Panc1 (cell line): ENCODE measurements at regions of chr3 and their contacts with region 1.

Region 1: GRCh38 chr3:42600111-42600988 is at the start of gene NKTR:
- DNase-seq: peak; percentile 91
- ATAC-seq: peak; percentile 94
- H3K4me3 ChIP-seq: peak within 1 kb of the TSS; percentile 88 to 97
- H3K27ac ChIP-seq: peak within 1 kb of the TSS; percentile 95
- H3K4me1 ChIP-seq: peaks cover 5% of the 10 kb centered on the region; the same call in 1 of the 2 replicates
- H3K27me3 ChIP-seq: no peaks in the 10 kb centered on the region
- CTCF ChIP-seq: no peak
- total RNA-seq, gene NKTR: 39.0 TPM

Region 2: DNA sequence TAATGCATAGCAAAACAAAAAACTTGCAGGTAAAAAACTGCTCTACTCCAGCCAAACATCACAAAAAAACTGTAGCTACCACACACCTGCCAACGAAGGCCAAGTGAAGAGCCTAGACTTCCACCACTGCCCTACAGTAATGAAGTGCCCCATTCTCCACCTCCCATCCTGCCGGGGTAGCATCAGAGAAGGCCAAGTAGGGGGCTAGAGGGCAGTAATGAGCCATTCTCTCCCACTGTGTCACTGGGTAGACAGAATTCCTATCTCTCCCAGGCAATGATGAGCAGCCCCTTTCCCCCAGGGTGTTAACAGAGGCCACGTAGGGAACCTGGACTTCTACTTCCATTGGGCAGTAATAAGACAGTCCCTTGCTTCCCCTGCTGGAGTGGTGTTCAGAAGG is 28.1 kb before region 1 on chr3:
- CTCF ChIA-PET with region 1: interaction called, 10 read pairs
- POLR2A ChIA-PET with region 1: no interaction called
- in situ Hi-C with region 1: no loop called
- intact Hi-C with region 1: no loop called
- DNase-seq: no peak
- ATAC-seq: peak; percentile 89
- H3K4me3 ChIP-seq: no peak overlapping the region
- H3K27ac ChIP-seq: no peak overlapping the region
- H3K4me1 ChIP-seq: no peaks in the 10 kb centered on the region
- H3K27me3 ChIP-seq: no peaks in the 10 kb centered on the region
- CTCF ChIP-seq: peak; percentile 73

Region 3: GRCh38 chr3:42746455-42747450 is 146.4 kb after region 1 on chr3:
- CTCF ChIA-PET with region 1: interaction called, 10 read pairs
- POLR2A ChIA-PET with region 1: no interaction called
- in situ Hi-C with region 1: no loop called
- intact Hi-C with region 1: no loop called
- DNase-seq: no peak
- ATAC-seq: no peak
- H3K4me3 ChIP-seq: no peak overlapping the region
- H3K27ac ChIP-seq: no peak overlapping the region
- H3K4me1 ChIP-seq: no peaks in the 10 kb centered on the region
- H3K27me3 ChIP-seq: no peaks in the 10 kb centered on the region
- CTCF ChIP-seq: no peak